MCF 10A (cell line): ENCODE measurements at regions of chr5 and their contacts with region 1.

Region 1: GRCh38 chr5:75336625-75337339 is at the start of gene HMGCR:
- DNase-seq: peak; percentile 99
- H3K4me3 Mint-ChIP-seq: no peak within 1 kb of the TSS
- H3K27ac Mint-ChIP-seq: no peak within 1 kb of the TSS
- H3K4me1 Mint-ChIP-seq: peaks cover 32% of the 10 kb centered on the region
- H3K27me3 Mint-ChIP-seq: no peaks in the 10 kb centered on the region
- CTCF ChIP-seq: no peak
- total RNA-seq, gene HMGCR: 47.7 and 59.9 TPM in 2 replicates

Region 2: GRCh38 chr5:74927336-74927735 is 409.4 kb before region 1 on chr5:
- CTCF ChIA-PET with region 1: interaction called, 12 read pairs
- POLR2A ChIA-PET with region 1: interaction called, 6 read pairs
- intact Hi-C with region 1: loop called (anchors 10 kb)
- DNase-seq: no peak
- H3K4me3 Mint-ChIP-seq: no peak overlapping the region
- H3K27ac Mint-ChIP-seq: no peak overlapping the region
- H3K4me1 Mint-ChIP-seq: no peaks in the 10 kb centered on the region
- H3K27me3 Mint-ChIP-seq: no peaks in the 10 kb centered on the region
- CTCF ChIP-seq: no peak

Region 3: DNA sequence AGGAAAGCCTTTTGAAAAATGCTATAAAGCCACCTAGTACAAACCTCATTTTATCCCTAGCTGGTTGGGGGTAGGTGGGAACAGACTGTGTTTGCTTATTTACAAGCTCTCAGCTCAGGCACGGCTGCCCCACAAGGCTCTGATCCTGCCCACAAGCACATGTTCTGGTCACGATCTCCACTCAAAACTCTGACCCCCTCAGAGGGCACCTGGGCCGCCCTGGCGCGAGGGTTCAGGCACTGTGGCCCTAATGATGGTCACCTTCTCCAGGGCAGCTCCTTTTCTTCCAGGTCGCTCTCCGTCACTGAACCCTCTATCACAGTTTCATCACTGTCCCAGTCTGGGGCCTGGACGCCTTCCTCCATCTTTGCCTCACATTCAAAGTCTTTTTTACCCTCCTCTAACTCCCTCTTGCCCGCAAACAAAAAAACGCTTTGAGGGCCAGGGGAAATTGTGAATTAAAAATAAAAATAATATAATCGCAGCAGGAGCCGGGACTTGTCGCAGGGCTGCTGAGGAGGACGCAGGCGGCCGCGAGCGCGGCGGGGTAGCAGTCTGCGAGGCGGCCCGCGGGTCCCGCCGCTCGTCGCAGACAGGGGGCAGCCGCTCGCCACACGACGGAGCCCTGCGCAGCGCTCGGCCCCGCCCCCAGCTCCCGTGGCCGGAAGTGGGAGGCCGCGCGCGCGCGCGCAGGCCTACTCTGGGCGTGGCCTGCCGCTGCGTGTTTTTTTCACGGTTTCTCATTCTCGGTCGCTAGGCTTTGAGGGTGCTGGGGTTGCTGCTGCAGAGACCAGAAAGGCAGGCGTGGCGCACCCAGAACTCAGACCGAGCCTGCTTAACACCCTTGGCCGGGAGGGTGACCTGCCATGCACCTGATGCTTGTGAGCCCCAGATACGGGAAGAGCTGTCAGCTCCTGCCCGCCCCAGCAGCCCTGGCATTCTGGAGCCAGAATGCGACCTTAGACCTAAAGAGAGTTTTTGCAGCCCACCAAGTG is 100.2 kb before region 1 on chr5 and contains the start of gene ANKRD31:
- CTCF ChIA-PET with region 1: interaction called, 4 read pairs
- POLR2A ChIA-PET with region 1: interaction called, 29 read pairs
- intact Hi-C with region 1: loop called (anchors 5 kb)
- DNase-seq: peak; percentile 54
- H3K4me3 Mint-ChIP-seq: peak within 1 kb of the TSS; percentile 75
- H3K27ac Mint-ChIP-seq: peak within 1 kb of the TSS; percentile 79
- H3K4me1 Mint-ChIP-seq: peaks cover 5% of the 10 kb centered on the region
- H3K27me3 Mint-ChIP-seq: no peaks in the 10 kb centered on the region
- CTCF ChIP-seq: peak; percentile 46
- total RNA-seq, gene ANKRD31: 0.28 and 0.56 TPM in 2 replicates

Region 4: DNA sequence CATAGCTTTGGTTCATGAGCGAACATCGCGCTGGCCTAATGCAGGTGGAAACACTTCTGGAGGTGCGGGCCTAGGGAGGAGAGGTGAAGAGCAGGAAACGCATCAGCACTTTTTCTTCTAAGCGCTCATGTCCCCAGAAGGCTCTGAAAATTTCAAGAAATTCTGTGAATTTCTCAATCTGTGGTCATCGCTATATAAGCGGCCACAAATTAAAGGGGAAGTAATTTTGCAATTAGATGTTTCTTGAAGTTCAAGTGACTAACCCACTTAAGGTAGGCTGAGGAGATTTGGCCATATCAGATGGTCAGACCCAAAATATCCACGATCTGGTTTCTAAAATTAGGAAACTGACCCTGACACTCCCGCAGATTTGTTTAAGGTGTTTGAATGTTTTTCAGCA is 16.4 kb before region 1 on chr5:
- CTCF ChIA-PET with region 1: interaction called, 8 read pairs
- POLR2A ChIA-PET with region 1: interaction called, 87 read pairs
- intact Hi-C with region 1: loop called (anchors 1 kb)
- DNase-seq: peak; percentile 32
- H3K4me3 Mint-ChIP-seq: peak overlapping the region; percentile 35
- H3K27ac Mint-ChIP-seq: peak overlapping the region; percentile 76
- H3K4me1 Mint-ChIP-seq: peaks cover 11% of the 10 kb centered on the region
- H3K27me3 Mint-ChIP-seq: no peaks in the 10 kb centered on the region
- CTCF ChIP-seq: no peak

Region 5: GRCh38 chr5:75363726-75364495 is 27.1 kb after region 1 on chr5:
- CTCF ChIA-PET with region 1: interaction called, 3 read pairs
- POLR2A ChIA-PET with region 1: interaction called, 16 read pairs
- intact Hi-C with region 1: no loop called
- DNase-seq: peak; percentile 18
- H3K4me3 Mint-ChIP-seq: no peak overlapping the region
- H3K27ac Mint-ChIP-seq: no peak overlapping the region
- H3K4me1 Mint-ChIP-seq: no peaks in the 10 kb centered on the region
- H3K27me3 Mint-ChIP-seq: no peaks in the 10 kb centered on the region
- CTCF ChIP-seq: no peak

Region 6: GRCh38 chr5:75524071-75524470 is 187.3 kb after region 1 on chr5:
- CTCF ChIA-PET with region 1: no interaction called
- POLR2A ChIA-PET with region 1: no interaction called
- intact Hi-C with region 1: no loop called
- DNase-seq: no peak
- H3K4me3 Mint-ChIP-seq: no peak overlapping the region
- H3K27ac Mint-ChIP-seq: no peak overlapping the region
- H3K4me1 Mint-ChIP-seq: peaks cover 14% of the 10 kb centered on the region
- H3K27me3 Mint-ChIP-seq: no peaks in the 10 kb centered on the region
- CTCF ChIP-seq: no peak

Region 7: DNA sequence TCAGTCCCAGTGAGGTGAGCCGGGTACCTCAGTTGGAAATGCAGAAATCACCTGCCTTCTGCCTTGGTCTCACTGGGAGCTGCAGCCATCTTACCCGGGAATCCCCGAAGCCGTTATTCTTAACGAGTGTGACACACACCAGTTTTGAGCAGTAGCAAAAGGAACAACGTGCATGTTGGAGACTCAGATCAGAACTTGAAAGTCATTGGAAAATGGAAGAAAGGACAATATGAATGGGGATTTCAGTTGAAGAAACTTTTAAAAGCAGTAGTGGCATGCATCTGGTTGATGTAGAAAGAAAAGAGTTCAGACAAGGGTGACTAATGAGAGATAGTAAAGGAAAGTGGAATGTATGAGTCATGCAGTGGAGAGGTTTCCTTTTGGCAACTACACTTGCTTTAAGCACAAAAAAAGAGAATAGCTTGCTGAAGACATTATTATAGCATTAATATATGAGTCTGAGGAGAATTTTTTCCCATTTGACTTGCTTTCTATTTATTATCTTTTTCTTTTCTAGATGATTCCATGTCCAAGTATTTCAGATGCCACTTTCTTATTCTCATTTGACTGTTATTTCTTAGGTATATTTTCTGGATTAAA is 230.0 kb after region 1 on chr5:
- CTCF ChIA-PET with region 1: no interaction called
- POLR2A ChIA-PET with region 1: interaction called, 4 read pairs
- intact Hi-C with region 1: loop called (anchors 2 kb)
- DNase-seq: peak; percentile 87
- H3K4me3 Mint-ChIP-seq: peak overlapping the region; percentile 71
- H3K27ac Mint-ChIP-seq: peak overlapping the region; percentile 85
- H3K4me1 Mint-ChIP-seq: peaks cover 33% of the 10 kb centered on the region
- H3K27me3 Mint-ChIP-seq: no peaks in the 10 kb centered on the region
- CTCF ChIP-seq: no peak